Pancreas (tissue), 10 donors: ENCODE measurements at regions of chr18 and their contacts with region 1.

Region 1: DNA sequence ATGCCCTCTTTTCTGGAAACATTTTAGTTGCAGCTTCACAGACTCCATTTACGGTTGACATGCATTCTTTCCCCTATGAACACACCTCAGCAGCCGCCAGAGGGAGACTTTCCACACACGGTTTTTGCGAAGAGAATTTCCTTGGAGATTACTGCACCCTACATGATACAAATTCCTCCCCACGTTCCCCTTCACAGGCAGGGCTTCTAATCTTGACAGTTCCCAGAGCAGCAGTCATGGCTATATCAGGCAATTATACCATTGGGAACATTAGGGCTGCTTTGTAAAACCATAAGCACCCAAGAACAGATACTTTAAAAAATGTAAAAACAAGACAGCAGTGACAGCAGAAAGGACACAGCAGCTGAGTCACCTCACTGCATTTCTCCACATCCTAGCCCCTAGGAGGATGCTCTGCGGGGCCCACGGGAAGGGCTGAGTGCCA is 253.8 kb downstream of the TGIF1 start:
- DNase-seq: peak in 5 of 6 donors; percentile 37 to 73 (median 58)
- ATAC-seq: peak; percentile 67 to 91 (median 90)
- H3K4me3 ChIP-seq: no peak overlapping the region
- H3K27ac ChIP-seq: no peak overlapping the region
- H3K4me1 ChIP-seq: no peaks in the 10 kb centered on the region
- H3K27me3 ChIP-seq: no peaks in the 10 kb centered on the region
- CTCF ChIP-seq: peak in 3 of 4 donors; percentile 38 to 52 (median 42)

Region 2: DNA sequence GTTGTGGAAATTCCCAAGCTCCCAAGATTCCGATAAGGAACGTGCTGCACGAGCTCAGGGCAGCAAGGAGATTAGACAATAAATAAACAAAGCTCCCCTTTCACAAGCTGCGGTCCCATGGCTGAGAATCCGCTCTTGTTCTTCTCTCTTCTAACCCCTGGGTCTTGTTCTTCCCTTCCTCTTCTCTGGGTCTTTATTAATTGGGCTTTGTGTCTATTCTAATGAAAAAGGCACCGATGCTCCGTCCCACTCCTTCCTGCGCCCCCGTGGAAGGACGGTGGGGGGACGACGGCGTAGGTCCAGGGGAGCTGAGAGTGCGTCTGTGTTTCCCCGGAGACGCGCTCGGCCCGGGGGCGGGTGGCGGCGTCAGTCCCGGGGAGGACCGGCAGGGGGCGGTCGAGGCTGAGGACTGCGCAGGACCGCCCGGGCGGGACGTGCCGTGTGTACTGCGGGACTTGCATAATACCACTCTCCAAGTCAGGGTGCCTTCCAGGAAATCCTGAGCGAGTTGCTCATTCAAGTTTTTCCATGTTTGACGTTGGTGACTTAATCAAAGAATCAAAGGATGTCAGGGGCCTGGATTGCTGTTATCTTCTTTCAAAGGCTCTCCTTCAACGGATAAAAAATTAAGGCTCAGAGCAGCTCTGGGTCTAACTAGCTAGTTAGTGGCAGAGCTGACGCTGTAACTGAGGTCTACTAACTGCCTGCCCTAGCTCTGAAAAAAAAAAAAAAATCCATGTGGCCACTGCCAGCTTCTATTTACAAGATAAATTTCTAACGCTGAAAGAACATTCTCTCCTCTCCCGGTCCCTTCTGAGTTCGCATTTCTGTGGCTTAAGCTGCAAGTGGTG is 67.6 kb after region 1 on chr18:
- intact Hi-C with region 1: no loop called
- DNase-seq: peak; percentile 77 to 97 (median 87)
- ATAC-seq: peak; percentile 95 to 99 (median 98)
- H3K4me3 ChIP-seq: peak overlapping the region in 2 of 4 donors; percentile 9 to 22
- H3K27ac ChIP-seq: peak overlapping the region in 2 of 4 donors; percentile 51 to 64
- H3K4me1 ChIP-seq: peaks cover 8 to 15% (median 12%) of the 10 kb centered on the region in 3 donors
- H3K27me3 ChIP-seq: peaks cover 0 to 8% (median 0%) of the 10 kb centered on the region in 4 donors
- CTCF ChIP-seq: peak; percentile 95 to 98 (median 97)

Region 3: GRCh38 chr18:3869848-3870247 is 166.1 kb after region 1 on chr18:
- intact Hi-C with region 1: loop called in 1 of 3 experiments (anchors 10 kb)
- DNase-seq: no peak
- ATAC-seq: peak; percentile 71 to 91 (median 88)
- H3K4me3 ChIP-seq: no peak overlapping the region
- H3K27ac ChIP-seq: no peak overlapping the region
- H3K4me1 ChIP-seq: no peaks in the 10 kb centered on the region
- H3K27me3 ChIP-seq: no peaks in the 10 kb centered on the region
- CTCF ChIP-seq: peak in 3 of 4 donors; percentile 23 to 34 (median 30)

Region 4: DNA sequence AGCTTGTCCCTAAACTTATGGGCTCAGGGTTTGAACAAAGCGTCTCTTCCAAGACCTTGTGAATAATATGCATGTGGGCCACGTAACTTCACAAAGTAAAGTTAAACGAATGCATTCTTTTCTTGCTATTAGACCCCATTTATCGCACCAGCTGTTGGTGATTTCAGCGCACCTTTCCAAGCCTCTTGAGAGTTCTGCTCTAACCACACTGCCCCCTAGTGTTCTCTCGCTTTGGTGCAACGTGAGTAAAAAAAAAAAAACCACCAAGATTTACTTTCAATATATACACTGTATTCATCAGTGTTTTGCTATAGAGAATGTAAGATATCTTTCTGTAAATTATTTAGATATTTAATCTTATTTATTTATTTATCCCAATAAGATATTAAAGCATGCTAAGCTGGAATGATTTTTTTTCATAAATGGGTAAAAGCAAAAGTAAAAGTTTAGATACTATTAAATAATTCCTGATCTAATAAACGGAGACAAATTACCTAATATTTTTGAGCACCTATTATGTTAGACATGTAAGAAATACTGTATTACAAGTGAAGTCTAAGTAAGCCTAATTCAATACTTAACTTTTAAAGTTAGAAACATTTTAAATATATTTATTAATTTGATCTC is 291.8 kb after region 1 on chr18:
- intact Hi-C with region 1: loop called in 1 of 3 experiments (anchors 10 kb)
- DNase-seq: peak in 4 of 6 donors; percentile 29 to 61 (median 48)
- ATAC-seq: peak; percentile 60 to 92 (median 80)
- H3K4me3 ChIP-seq: no peak overlapping the region
- H3K27ac ChIP-seq: no peak overlapping the region
- H3K4me1 ChIP-seq: peaks cover 0 to 3% (median 0%) of the 10 kb centered on the region in 3 donors
- H3K27me3 ChIP-seq: peaks cover 0 to 6% (median 0%) of the 10 kb centered on the region in 4 donors
- CTCF ChIP-seq: peak; percentile 76 to 88 (median 82)